Left cardiac atrium (tissue), 4 donors: ENCODE measurements at regions of chrX and their contacts with region 1.

Region 1: GRCh38 chrX:3638280-3638873 is 75.1 kb downstream of the PRKX start:
- DNase-seq: peak; percentile 25
- ATAC-seq: no peak

Region 2: DNA sequence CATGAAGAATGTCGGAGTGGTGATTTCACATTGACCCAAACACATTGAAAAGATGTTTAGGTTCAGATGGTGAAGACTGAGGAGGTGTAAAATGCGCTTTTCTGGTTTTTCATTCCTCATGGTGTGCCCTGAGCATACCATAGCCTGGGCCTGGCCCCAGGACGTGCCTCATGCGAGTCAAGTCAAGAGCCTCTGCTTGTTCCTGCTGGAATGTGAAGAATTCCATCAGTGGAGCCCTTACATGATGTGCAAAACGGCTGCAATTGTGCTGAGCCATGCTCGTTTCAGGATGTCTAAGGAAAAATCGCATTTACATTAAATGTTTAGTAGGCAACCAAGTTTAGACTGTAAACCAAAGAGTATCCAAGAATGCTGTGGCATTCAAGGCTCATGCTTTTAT is 774.7 kb before region 1 on chrX:
- intact Hi-C with region 1: no loop called
- DNase-seq: no peak
- ATAC-seq: no peak

Region 3: DNA sequence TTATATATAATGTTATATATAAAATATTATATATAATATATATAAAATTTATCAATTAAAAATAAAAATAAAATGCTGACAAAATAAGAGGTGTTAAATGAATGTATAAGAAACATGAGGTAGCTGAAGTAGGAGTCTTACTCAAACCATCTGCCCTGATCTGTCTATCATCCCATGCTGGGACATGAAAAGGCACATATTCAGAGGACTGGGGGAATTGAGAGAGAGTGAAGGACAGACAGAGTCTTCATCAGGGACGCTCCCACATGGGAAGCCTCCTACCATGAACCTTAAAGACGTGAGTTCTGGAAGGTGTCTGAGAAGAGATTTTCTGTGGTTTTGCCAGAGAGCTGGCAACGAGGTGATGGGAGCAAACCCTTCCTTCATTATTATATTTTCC is 601.2 kb before region 1 on chrX:
- intact Hi-C with region 1: loop called in 1 of 2 experiments (anchors 5 kb)
- DNase-seq: no peak
- ATAC-seq: no peak

Region 4: DNA sequence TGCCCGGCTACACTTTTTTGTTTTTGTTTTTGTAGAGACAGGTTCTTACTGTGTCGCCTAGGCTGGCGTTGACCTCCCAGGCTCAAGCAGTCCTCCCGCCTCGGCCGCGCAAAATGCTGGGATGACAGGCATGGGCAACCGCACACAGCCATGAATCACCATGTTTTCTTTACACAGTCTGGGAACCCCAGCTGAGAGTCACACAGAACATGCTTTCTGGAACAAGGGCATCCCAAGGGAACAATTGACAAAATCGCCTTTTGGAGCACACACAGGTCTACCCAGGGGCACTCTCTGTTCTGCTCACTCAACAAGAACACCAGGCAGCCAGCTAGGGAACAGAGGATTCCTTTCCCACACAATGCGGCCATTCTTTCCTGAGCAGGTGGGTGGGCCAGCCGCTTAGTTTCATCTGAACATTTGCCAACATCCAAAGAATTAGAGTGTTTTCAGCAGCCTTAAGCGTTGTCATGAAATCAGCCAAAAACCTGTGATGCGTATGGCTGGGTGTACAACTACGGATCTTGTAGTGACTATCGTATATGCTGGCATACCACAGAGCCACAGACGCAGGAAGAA is 59.4 kb after region 1 on chrX:
- intact Hi-C with region 1: no loop called
- DNase-seq: peak; percentile 44
- ATAC-seq: peak in 1 of 2 donors; percentile 83